Lower leg skin (tissue), 4 donors: ENCODE measurements at regions of chrX and their contacts with region 1.

Region 1: DNA sequence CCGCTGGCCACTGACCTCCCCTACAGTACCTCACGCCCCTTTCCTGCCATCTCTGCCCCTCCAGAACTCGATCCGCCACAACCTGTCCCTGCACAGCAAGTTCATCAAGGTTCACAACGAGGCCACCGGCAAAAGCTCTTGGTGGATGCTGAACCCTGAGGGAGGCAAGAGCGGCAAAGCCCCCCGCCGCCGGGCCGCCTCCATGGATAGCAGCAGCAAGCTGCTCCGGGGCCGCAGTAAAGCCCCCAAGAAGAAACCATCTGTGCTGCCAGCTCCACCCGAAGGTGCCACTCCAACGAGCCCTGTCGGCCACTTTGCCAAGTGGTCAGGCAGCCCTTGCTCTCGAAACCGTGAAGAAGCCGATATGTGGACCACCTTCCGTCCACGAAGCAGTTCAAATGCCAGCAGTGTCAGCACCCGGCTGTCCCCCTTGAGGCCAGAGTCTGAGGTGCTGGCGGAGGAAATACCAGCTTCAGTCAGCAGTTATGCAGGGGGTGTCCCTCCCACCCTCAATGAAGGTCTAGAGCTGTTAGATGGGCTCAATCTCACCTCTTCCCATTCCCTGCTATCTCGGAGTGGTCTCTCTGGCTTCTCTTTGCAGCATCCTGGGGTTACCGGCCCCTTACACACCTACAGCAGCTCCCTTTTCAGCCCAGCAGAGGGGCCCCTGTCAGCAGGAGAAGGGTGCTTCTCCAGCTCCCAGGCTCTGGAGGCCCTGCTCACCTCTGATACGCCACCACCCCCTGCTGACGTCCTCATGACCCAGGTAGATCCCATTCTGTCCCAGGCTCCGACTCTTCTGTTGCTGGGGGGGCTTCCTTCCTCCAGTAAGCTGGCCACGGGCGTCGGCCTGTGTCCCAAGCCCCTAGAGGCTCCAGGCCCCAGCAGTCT is 5.2 kb downstream of the FOXO4 start:
- DNase-seq: no peak
- H3K4me3 ChIP-seq: no peak overlapping the region
- CTCF ChIP-seq: no peak
- POLR2A ChIP-seq: no peak

Region 2: GRCh38 chrX:70618467-70618866 is 482.4 kb before region 1 on chrX:
- intact Hi-C with region 1: no loop called
- DNase-seq: no peak
- H3K4me3 ChIP-seq: no peak overlapping the region
- CTCF ChIP-seq: no peak
- POLR2A ChIP-seq: no peak

Region 3: DNA sequence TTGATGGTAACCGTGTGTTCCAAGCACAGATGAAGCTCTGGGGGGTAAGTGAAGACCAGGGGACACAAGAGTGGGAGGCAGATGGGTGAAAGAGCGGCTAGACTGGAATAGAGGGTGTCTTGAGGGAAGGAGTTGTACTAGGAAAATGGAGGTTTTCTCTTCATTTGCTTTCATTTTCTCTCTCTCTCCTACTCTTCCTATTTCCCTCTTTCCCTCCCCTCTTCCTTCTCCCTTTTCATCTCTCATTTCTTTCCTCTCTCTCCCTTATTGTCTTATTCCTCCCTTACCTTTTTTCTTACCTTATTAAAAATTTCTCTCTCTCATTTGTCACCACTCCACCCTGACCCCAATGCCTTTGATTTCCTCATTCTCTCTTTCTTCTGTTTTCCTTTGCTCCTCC is 203.7 kb after region 1 on chrX:
- intact Hi-C with region 1: loop called (anchors 2 kb)
- DNase-seq: no peak
- H3K4me3 ChIP-seq: no peak overlapping the region
- CTCF ChIP-seq: no peak
- POLR2A ChIP-seq: no peak

Region 4: DNA sequence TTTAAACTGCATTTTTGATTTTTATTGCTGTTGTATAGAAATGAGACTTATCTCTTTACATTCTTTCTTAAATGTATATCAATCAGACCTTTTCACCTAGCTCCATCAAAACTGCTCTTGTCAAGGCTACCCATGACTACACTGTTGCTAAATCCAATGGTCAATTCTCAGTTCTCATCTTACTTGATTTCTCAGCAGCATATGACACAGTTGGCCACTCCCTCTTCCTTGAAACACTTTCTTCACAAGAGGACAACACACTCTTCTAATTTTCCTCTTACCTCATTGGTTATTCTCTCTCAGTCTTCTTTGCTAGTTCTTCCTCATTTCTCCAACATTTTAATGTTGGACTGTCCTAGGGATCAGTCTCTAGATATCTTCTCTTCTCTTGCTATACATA is 1299.0 kb after region 1 on chrX:
- intact Hi-C with region 1: no loop called
- DNase-seq: no peak
- H3K4me3 ChIP-seq: no peak overlapping the region
- CTCF ChIP-seq: no peak
- POLR2A ChIP-seq: no peak